Activated naive CD8-positive, alpha-beta T cell treated with anti-CD3 and anti-CD28 coated beads, Interleukin-2, amount 10 ng/mL, durations not matched to agents 7 days and 5 days (primary cell): ENCODE measurements at regions of chr19 and their contacts with region 1.

Region 1: GRCh38 chr19:38899447-38900219 is at the starts of genes NFKBIB and SIRT2:
- DNase-seq: peak; percentile 94
- ATAC-seq: peak; percentile 93
- H3K4me3 Mint-ChIP-seq: peak within 1 kb of the TSS; percentile 96
- H3K27ac Mint-ChIP-seq: peak within 1 kb of the TSS; percentile 96
- H3K4me1 Mint-ChIP-seq: peaks cover 32% of the 10 kb centered on the region
- H3K27me3 Mint-ChIP-seq: no peaks in the 10 kb centered on the region
- total RNA-seq, gene NFKBIB: 30.0 to 31.1 TPM
- total RNA-seq, gene SIRT2: 46.6 to 49.1 TPM

Region 2: GRCh38 chr19:38869856-38870607 is 29.6 kb before region 1 on chr19:
- POLR2A ChIA-PET with region 1: interaction called, 11 read pairs
- DNase-seq: peak; percentile 99
- ATAC-seq: peak; percentile 97
- H3K4me3 Mint-ChIP-seq: peak overlapping the region; percentile 89
- H3K27ac Mint-ChIP-seq: peak overlapping the region; percentile 89
- H3K4me1 Mint-ChIP-seq: peaks cover 35% of the 10 kb centered on the region
- H3K27me3 Mint-ChIP-seq: no peaks in the 10 kb centered on the region

Region 3: DNA sequence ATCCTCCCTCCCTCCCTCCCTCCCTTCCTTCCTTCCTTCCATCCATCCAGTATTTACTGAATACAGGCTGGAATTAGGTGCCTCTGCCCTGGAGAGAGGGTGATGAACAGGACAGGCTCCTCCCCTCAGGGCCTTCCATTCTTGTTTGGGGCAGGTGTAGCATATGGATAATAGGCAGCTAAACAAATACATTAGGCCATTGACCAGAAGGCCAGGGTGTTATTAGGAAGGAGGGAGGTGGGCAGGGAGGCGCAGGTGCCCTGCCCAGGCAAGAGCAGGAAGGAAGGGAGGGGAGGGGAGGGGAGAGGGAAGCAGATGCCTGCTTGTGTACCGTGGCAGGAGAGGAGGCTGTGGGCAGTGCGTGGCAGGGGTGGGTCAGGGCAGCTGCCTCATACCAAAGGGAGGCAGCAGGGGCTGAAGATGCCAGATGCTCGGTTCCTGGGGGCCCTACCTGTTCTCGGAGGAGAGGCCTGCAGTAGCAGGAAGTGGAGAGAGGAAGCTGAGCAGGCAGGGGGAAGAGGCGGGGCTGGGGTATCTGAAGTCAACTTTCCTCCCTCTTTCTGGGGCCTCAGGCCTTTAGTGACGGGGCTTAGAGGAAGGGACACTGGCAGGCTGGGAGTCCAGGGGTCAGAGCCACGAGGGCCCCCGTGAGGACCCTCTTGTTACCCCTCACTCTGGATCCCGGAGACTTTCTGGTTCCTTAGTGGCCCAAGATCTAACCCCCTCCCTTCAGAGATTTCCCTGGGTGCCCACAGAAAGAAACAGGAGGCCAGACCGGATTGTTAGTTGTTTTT is 21.7 kb before region 1 on chr19 and contains the start of gene RINL:
- POLR2A ChIA-PET with region 1: interaction called, 12 read pairs
- DNase-seq: peak; percentile 70
- ATAC-seq: peak; percentile 92
- H3K4me3 Mint-ChIP-seq: peak within 1 kb of the TSS; percentile 97
- H3K27ac Mint-ChIP-seq: peak within 1 kb of the TSS; percentile 97
- H3K4me1 Mint-ChIP-seq: peaks cover 22% of the 10 kb centered on the region
- H3K27me3 Mint-ChIP-seq: no peaks in the 10 kb centered on the region
- total RNA-seq, gene RINL: 71.3 to 74.2 TPM

Region 4: GRCh38 chr19:38929929-38930775 is 30.5 kb after region 1 on chr19 and contains the start of gene SARS2:
- POLR2A ChIA-PET with region 1: interaction called, 13 read pairs
- DNase-seq: peak; percentile 96
- ATAC-seq: peak; percentile 74
- H3K4me3 Mint-ChIP-seq: peak within 1 kb of the TSS; percentile 98
- H3K27ac Mint-ChIP-seq: peak within 1 kb of the TSS; percentile 99
- H3K4me1 Mint-ChIP-seq: peaks cover 29% of the 10 kb centered on the region
- H3K27me3 Mint-ChIP-seq: no peaks in the 10 kb centered on the region
- total RNA-seq, gene SARS2: 35.6 to 40.7 TPM